Gastrocnemius medialis (tissue), 4 donors: ENCODE measurements at regions of chr3 and their contacts with region 1.

Region 1: GRCh38 chr3:62159709-62160092 is 213.6 kb downstream of the FEZF2 start:
- DNase-seq: peak; percentile 92
- ATAC-seq: peak; percentile 92
- H3K4me3 ChIP-seq: peak overlapping the region; percentile 2 to 40 (median 6)
- H3K27ac ChIP-seq: peak overlapping the region; percentile 89 to 93 (median 91)
- H3K4me1 ChIP-seq: peaks cover 49 to 65% of the 10 kb centered on the region in 2 donors
- H3K27me3 ChIP-seq: no peaks in the 10 kb centered on the region
- CTCF ChIP-seq: no peak
- POLR2A ChIP-seq: peak; percentile 23 to 64

Region 2: GRCh38 chr3:62039586-62039985 is 120.1 kb before region 1 on chr3:
- in situ Hi-C with region 1: no loop called
- intact Hi-C with region 1: loop called (anchors 5 kb)
- DNase-seq: no peak
- ATAC-seq: no peak
- H3K4me3 ChIP-seq: no peak overlapping the region
- H3K27ac ChIP-seq: peak overlapping the region; percentile 71 to 76 (median 74)
- H3K4me1 ChIP-seq: peaks cover 17 to 24% of the 10 kb centered on the region in 2 donors
- H3K27me3 ChIP-seq: no peaks in the 10 kb centered on the region
- CTCF ChIP-seq: no peak
- POLR2A ChIP-seq: no peak